ENCODE measurements at regions of chr6 and their contacts with region 1.

Region 1: DNA sequence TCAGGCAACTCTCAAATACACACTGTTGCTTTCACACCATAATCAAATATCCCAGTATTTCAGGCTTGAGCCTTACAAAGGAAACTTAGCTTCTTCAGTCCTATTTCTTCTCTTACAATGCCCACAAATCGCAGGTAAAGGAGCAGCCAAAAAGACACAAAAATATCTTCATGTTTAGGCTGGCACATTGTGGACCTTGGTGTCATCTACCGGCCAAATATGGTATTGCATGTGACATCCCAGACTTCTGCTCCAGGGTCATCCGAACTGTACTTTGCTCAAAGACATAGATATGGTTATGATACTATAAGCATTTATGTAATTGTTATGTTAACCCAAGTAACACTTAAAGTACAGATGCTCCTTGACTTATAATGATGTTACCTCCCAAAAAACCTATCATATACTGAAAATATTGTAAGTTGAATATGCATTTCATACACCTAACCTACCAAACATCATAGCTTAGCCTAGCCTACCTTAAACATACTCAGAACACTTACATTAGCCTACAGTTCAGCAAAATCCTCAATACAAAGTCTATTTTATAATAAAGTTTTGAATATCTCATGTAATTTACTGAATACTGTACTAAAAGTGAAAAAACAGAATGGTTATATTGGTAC is 4.6 kb downstream of the OR2H2 start:
- DNase-seq: peak in 1 of 3 donors; percentile 75
- ATAC-seq: peak; percentile 75
- H3K4me3 ChIP-seq: no peak overlapping the region
- H3K4me1 ChIP-seq: no peaks in the 10 kb centered on the region
- CTCF ChIP-seq: peak; percentile 92

Region 2: DNA sequence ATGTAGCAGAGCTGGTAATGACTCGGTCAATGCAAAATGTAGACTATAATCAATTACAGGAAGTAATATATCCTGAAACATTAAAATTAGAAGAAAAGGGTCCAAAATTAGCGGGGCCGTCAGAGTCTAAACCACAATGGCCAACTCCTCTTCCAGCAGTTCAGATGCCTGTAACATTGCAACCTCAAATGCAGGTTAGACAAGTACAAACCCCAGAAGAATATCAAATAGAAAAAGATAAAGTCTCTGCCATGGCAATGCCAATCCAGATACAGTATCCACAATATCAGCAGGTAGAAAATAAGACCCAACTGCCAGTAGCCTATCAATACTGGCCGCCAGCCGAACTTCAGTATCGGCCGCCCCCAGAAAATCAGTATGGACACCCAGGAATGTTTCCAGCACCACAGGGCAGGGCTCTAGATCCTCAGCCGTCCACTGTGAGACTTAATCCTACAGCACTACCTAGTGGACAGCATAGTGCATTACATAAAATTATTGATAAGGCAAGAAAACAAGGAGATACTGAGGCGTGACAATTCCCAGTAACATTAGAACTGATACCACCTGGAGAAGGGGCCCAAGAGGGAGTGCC is 905.5 kb before region 1 on chr6:
- intact Hi-C with region 1: loop called in 1 of 2 experiments (anchors 5 kb)
- DNase-seq: no peak
- ATAC-seq: peak; percentile 71
- H3K4me3 ChIP-seq: no peak overlapping the region
- H3K4me1 ChIP-seq: no peaks in the 10 kb centered on the region
- CTCF ChIP-seq: no peak

Region 3: DNA sequence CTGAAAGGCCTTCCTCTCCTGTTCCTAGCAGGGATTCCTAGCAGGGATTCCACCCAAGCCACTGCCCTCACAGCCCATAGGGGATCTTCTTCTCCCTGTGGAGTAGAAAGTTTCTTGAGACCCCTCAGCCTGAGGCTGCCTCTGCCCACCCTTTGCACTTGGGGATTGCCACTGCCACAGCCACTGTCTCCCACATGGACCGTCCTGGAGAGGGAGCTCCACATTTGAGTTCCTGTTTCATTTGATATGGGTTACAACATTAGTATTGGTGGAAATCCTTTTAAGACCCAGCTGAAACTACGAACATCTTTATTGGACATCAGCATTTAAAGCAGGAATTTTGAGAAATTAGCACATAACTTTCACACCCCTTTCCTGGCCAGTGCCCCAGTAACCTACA is 263.7 kb after region 1 on chr6:
- intact Hi-C with region 1: no loop called
- DNase-seq: no peak
- ATAC-seq: no peak
- H3K4me3 ChIP-seq: no peak overlapping the region
- H3K4me1 ChIP-seq: no peaks in the 10 kb centered on the region
- CTCF ChIP-seq: no peak

Region 4: DNA sequence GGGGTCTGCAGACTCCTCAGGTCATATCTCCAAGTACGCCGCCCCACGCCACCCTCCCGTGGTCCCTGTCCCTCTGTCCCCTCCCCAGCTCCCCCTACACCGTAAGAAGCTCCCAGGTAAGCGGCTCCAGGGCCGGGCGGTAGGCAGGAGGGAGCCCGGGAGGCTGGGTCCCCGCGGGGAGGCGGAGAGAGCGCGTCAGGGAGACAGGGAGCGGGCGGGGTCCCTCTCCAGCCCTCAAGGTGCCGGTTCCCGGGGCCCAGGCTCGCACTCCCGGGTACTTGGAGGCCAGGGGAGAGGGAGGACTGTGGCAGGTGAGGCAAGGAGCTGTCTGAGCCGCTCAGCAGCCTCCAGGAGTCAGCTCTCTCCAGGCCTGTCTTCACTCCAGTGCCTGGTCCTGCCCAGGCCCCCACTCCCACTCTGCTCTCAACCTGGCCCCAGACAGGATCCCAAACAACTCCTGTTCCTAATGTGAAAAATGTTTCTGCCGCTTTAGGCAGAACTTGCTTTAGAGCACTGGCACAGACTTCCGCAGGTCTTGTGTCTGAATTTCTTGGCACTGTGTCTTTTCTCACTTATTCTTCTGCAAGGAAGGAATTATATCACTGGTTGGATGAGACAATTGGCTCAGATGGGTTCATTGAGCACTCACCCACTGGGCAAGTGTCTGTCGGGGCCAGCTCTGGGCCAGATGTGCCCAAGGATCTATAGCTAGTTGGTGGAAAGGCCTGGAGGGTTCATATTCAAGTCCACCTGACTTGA is 274.7 kb after region 1 on chr6:
- intact Hi-C with region 1: no loop called
- DNase-seq: no peak
- ATAC-seq: no peak
- H3K4me3 ChIP-seq: no peak overlapping the region
- H3K4me1 ChIP-seq: no peaks in the 10 kb centered on the region
- CTCF ChIP-seq: no peak

Region 5: GRCh38 chr6:31068669-31069340 is 1479.3 kb after region 1 on chr6:
- intact Hi-C with region 1: no loop called
- DNase-seq: peak; percentile 64 to 89 (median 84)
- ATAC-seq: peak; percentile 97
- H3K4me3 ChIP-seq: no peak overlapping the region
- H3K4me1 ChIP-seq: no peaks in the 10 kb centered on the region
- CTCF ChIP-seq: peak; percentile 89